CD14-positive monocyte (primary cell): ENCODE measurements at regions of chr9 and their contacts with region 1.

Region 1: GRCh38 chr9:37903647-37904444 is at the start of gene SLC25A51:
- DNase-seq: peak; percentile 86 to 93 (median 88)
- H3K4me3 ChIP-seq: peak within 1 kb of the TSS; percentile 50 to 93 (median 84)
- H3K4me3 Mint-ChIP-seq: peak within 1 kb of the TSS; percentile 83 to 90
- H3K27ac ChIP-seq: peak within 1 kb of the TSS; percentile 64 to 91
- H3K27ac Mint-ChIP-seq: peak within 1 kb of the TSS; percentile 84 to 94 (median 91)
- H3K4me1 ChIP-seq: peaks cover 26 to 39% of the 10 kb centered on the region in 2 donors
- H3K4me1 Mint-ChIP-seq: peaks cover 33% of the 10 kb centered on the region
- H3K27me3 ChIP-seq: no peaks in the 10 kb centered on the region
- H3K27me3 Mint-ChIP-seq: peaks cover 0 to 2% (median 2%) of the 10 kb centered on the region in 3 donors
- CTCF ChIP-seq: peak; percentile 92
- polyA plus RNA-seq, gene SLC25A51: 5.9 to 12.4 (median 8.9) TPM

Region 2: DNA sequence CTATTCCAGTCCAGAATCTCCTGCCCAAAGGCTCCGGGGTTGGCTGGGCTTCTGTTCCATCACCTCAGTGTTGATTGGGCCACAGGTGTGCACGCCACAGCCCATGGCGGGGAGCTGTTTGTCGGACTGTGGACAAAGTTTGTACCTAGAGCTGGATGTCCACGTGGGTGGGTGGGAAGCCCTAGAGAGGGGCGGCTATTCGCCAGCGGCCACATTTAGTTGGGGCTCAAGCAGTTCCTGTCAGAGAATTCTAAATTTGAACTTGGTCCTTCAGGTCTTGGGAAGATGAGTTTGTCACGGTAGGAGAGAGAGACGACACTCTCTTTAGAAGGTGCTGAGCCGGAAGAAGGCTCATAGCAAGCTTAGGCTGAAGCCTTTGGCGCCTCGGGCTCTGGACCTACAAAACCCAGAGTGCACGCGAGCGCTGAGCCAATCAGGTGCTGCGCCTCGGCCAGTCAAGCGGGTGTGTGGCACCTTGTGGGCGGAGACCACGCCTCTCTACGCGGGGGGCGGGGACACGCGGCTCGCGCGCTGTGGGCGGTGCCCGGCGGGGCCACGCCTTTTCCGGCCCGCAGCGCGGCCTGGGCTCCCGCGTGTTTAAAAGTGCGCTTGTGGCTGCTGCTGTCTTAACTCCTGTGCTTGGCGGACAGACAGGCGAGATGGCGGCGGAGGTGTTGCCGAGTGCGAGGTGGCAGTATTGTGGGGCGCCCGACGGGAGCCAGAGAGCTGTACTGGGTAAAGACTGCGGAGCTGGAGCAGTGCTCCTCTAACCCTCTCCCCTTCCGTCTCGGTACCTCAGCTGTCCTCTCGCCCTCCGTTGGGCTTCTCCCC is 418.2 kb before region 1 on chr9 and contains the start of gene POLR1E:
- intact Hi-C with region 1: loop called in 1 of 2 experiments (anchors 10 kb)
- DNase-seq: peak; percentile 91 to 94 (median 93)
- H3K4me3 ChIP-seq: peak within 1 kb of the TSS; percentile 66 to 85 (median 75)
- H3K4me3 Mint-ChIP-seq: peak within 1 kb of the TSS; percentile 88 to 93
- H3K27ac ChIP-seq: peak within 1 kb of the TSS in 1 of 2 donors; percentile 56
- H3K27ac Mint-ChIP-seq: peak within 1 kb of the TSS; percentile 57 to 92 (median 74)
- H3K4me1 ChIP-seq: peaks cover 15 to 24% of the 10 kb centered on the region in 2 donors
- H3K4me1 Mint-ChIP-seq: peaks cover 23% of the 10 kb centered on the region
- H3K27me3 ChIP-seq: peaks cover 0 to 2% of the 10 kb centered on the region in 2 donors
- H3K27me3 Mint-ChIP-seq: peaks cover 4 to 10% (median 6%) of the 10 kb centered on the region in 3 donors
- CTCF ChIP-seq: no peak
- polyA plus RNA-seq, gene POLR1E: 2.3 to 4.1 (median 2.4) TPM

Region 3: DNA sequence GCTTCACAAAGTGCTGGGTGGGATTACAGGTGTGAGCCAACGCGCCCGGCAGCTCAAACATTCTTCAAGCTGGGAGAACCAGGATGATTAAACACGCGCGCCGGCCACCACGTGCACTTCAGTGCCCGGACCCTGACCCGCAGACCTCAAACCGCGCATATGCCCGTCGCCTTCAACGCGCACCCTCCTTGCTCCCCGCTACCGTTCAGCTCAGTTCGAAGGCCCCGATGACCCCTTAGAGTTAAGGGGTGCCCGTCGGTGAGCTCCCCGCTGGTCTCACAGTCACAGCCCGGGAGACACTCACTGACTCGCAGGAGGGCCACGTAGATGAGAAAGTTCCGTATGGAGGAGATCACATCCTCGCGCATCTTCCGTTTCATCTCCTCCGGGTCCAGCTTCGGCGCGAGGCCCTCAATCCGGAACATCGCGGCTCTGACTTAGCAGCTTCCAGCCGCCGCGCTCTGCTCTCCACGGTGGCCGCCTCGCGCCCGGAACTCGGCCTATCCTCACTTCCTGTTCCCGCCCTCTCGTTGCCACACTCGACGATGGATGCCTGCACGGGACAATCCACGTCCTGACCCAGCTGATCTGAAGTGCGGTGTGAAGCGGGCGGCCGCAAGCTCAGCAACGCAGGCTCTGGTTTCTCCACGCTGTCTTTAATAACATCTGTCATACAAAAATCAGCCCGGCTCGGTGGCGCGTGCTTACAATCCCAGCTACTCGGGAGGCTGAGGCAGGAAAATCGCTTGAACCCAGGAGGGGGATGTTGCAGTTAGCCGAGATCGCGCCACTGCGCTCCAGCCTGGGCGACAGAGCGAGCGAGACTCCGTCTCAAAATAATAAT is 311.5 kb before region 1 on chr9 and contains the start of gene TOMM5:
- intact Hi-C with region 1: loop called in 1 of 2 experiments (anchors 10 kb)
- DNase-seq: peak; percentile 86 to 93 (median 91)
- H3K4me3 ChIP-seq: peak within 1 kb of the TSS; percentile 63 to 94 (median 77)
- H3K4me3 Mint-ChIP-seq: peak within 1 kb of the TSS; percentile 98 to 99
- H3K27ac ChIP-seq: peak within 1 kb of the TSS; percentile 75 to 96
- H3K27ac Mint-ChIP-seq: peak within 1 kb of the TSS; percentile 94 to 98 (median 97)
- H3K4me1 ChIP-seq: peaks cover 28 to 32% of the 10 kb centered on the region in 2 donors
- H3K4me1 Mint-ChIP-seq: peaks cover 34% of the 10 kb centered on the region
- H3K27me3 ChIP-seq: peaks cover 0 to 4% of the 10 kb centered on the region in 2 donors
- H3K27me3 Mint-ChIP-seq: peaks cover 4 to 11% (median 7%) of the 10 kb centered on the region in 3 donors
- CTCF ChIP-seq: no peak
- polyA plus RNA-seq, gene TOMM5: 35.0 to 117 (median 112) TPM

Region 4: GRCh38 chr9:37784616-37785483 is 119.0 kb before region 1 on chr9 and contains the start of gene EXOSC3:
- intact Hi-C with region 1: loop called in 1 of 2 experiments (anchors 10 kb)
- DNase-seq: peak; percentile 88 to 90 (median 90)
- H3K4me3 ChIP-seq: peak within 1 kb of the TSS; percentile 73 to 97 (median 84)
- H3K4me3 Mint-ChIP-seq: peak within 1 kb of the TSS; percentile 97 to 98
- H3K27ac ChIP-seq: peak within 1 kb of the TSS; percentile 82 to 89
- H3K27ac Mint-ChIP-seq: peak within 1 kb of the TSS; percentile 88 to 96 (median 95)
- H3K4me1 ChIP-seq: peaks cover 24 to 29% of the 10 kb centered on the region in 2 donors
- H3K4me1 Mint-ChIP-seq: peaks cover 31% of the 10 kb centered on the region
- H3K27me3 ChIP-seq: no peaks in the 10 kb centered on the region
- H3K27me3 Mint-ChIP-seq: peaks cover 2 to 10% (median 7%) of the 10 kb centered on the region in 3 donors
- CTCF ChIP-seq: no peak
- polyA plus RNA-seq, gene EXOSC3: 9.8 to 25.2 (median 19.6) TPM

Region 5: GRCh38 chr9:37994639-37995347 is 90.9 kb after region 1 on chr9:
- intact Hi-C with region 1: loop called in 1 of 2 experiments (anchors 5 kb)
- DNase-seq: peak; percentile 95 to 98 (median 95)
- H3K4me3 ChIP-seq: peak overlapping the region in 1 of 3 experiments; percentile 41
- H3K4me3 Mint-ChIP-seq: peak overlapping the region; percentile 67 to 83
- H3K27ac ChIP-seq: peak overlapping the region; percentile 85 to 97
- H3K27ac Mint-ChIP-seq: peak overlapping the region; percentile 97 to 99 (median 99)
- H3K4me1 ChIP-seq: peaks cover 74% of the 10 kb centered on the region in 2 donors
- H3K4me1 Mint-ChIP-seq: peaks cover 81% of the 10 kb centered on the region
- H3K27me3 ChIP-seq: no peaks in the 10 kb centered on the region
- H3K27me3 Mint-ChIP-seq: peaks cover 0 to 3% (median 0%) of the 10 kb centered on the region in 3 donors
- CTCF ChIP-seq: no peak